ENCODE measurements at regions of chr10 and their contacts with region 1.

Region 1: DNA sequence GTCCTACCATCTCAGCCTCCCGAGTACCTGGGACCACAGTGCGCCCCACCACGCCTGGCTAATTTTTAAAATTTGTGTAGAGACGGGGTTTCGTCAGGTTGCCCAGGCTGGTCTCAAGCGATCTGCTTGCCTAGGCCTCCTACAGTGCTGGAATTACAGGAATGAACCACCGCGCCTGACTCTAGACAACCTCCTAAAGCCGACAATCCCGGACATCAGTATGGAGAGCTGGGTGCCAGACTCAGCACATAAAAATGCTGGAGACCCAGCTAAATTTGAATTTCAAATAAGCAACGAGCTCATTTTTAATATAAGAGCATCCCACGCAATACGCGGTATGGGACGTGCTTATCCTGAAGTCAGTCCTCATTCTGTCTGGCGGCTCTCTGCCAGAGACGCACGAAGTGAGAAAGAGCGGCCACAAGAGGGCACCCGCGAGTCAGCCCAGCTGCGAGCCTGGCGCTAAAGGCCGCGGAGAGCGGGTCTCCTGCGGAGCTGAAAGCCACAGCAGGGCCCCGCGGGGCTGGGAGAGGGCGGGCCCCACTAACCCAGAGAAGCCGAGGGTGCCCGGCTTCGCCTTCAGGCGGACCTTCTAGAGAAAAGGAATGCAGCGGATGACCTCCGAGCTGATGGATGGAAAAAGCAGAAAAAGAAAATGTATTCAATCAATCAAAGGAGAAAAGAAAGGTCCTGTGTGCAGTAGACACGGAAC is 7.0 kb downstream of the CALY start:
- DNase-seq: peak; percentile 75 to 95 (median 86)
- ATAC-seq: peak; percentile 86
- H3K4me3 ChIP-seq: peak overlapping the region; percentile 25
- H3K4me3 Mint-ChIP-seq: peak overlapping the region; percentile 42
- H3K27ac ChIP-seq: no peak overlapping the region
- H3K27ac Mint-ChIP-seq: no peak overlapping the region
- H3K4me1 ChIP-seq: peaks cover 27% of the 10 kb centered on the region
- H3K4me1 Mint-ChIP-seq: peaks cover 18% of the 10 kb centered on the region
- H3K27me3 ChIP-seq: peaks cover 42 to 43% of the 10 kb centered on the region in 2 experiments
- H3K27me3 Mint-ChIP-seq: peaks cover 52% of the 10 kb centered on the region
- CTCF ChIP-seq: peak; percentile 94

Region 2: GRCh38 chr10:133357285-133358151 is 27.9 kb after region 1 on chr10 and contains the start of gene FUOM:
- CTCF ChIA-PET with region 1: interaction called, 12 read pairs
- POLR2A ChIA-PET with region 1: no interaction called
- intact Hi-C with region 1: no loop called
- DNase-seq: peak; percentile 51 to 88 (median 66)
- ATAC-seq: peak; percentile 91
- H3K4me3 ChIP-seq: peak within 1 kb of the TSS; percentile 63
- H3K4me3 Mint-ChIP-seq: peak within 1 kb of the TSS; percentile 83
- H3K27ac ChIP-seq: peak within 1 kb of the TSS in 1 of 2 donors; percentile 29
- H3K27ac Mint-ChIP-seq: peak within 1 kb of the TSS; percentile 53
- H3K4me1 ChIP-seq: peaks cover 22% of the 10 kb centered on the region
- H3K4me1 Mint-ChIP-seq: no peaks in the 10 kb centered on the region
- H3K27me3 ChIP-seq: no peaks in the 10 kb centered on the region
- H3K27me3 Mint-ChIP-seq: no peaks in the 10 kb centered on the region
- CTCF ChIP-seq: no peak
- total RNA-seq, gene FUOM: 10.3 to 11.7 TPM

Region 3: GRCh38 chr10:133378251-133379096 is 48.8 kb after region 1 on chr10:
- CTCF ChIA-PET with region 1: interaction called, 5 read pairs
- POLR2A ChIA-PET with region 1: interaction called, 4 read pairs
- intact Hi-C with region 1: loop called in 1 of 2 experiments (anchors 2 kb)
- DNase-seq: peak; percentile 39 to 78 (median 53)
- ATAC-seq: peak; percentile 58
- H3K4me3 ChIP-seq: peak overlapping the region; percentile 93
- H3K4me3 Mint-ChIP-seq: peak overlapping the region; percentile 87
- H3K27ac ChIP-seq: peak overlapping the region in 1 of 2 donors; percentile 40
- H3K27ac Mint-ChIP-seq: peak overlapping the region; percentile 24
- H3K4me1 ChIP-seq: peaks cover 34% of the 10 kb centered on the region
- H3K4me1 Mint-ChIP-seq: peaks cover 4% of the 10 kb centered on the region
- H3K27me3 ChIP-seq: no peaks in the 10 kb centered on the region
- H3K27me3 Mint-ChIP-seq: no peaks in the 10 kb centered on the region
- CTCF ChIP-seq: no peak

Region 4: DNA sequence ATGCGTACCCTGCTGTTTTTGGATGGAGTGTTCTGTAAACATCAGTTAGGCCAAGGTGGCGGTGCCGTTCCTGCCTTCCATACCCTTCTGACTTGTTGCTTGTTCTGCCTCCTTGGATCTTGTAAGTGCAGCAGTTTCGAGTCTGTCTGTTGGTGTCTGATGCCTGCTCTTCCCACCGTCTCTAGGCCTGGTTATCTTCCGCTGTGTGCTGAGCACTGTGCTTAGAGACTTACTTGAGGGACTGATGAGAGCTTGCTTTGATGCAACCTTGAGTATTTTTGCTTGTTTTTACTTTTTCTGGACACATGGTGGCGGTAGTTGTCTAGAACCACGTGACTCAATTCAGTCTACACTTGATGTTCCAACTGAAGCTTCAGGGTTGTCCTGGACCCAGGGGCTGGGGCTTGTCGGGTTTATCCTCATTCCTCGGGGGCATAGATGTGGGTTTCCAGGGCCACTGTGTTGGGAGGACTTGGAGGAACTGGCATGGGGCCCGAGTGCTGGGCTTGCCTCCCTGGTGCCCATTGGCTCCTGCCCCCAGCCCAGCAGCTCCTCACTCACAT is 109.1 kb after region 1 on chr10:
- CTCF ChIA-PET with region 1: interaction called, 13 read pairs
- POLR2A ChIA-PET with region 1: no interaction called
- intact Hi-C with region 1: loop called in 1 of 2 experiments (anchors 5 kb)
- DNase-seq: peak in 3 of 14 experiments; percentile 54 to 60 (median 55)
- ATAC-seq: no peak
- H3K4me3 ChIP-seq: no peak overlapping the region
- H3K4me3 Mint-ChIP-seq: no peak overlapping the region
- H3K27ac ChIP-seq: no peak overlapping the region
- H3K27ac Mint-ChIP-seq: no peak overlapping the region
- H3K4me1 ChIP-seq: peaks cover 53% of the 10 kb centered on the region
- H3K4me1 Mint-ChIP-seq: peaks cover 29% of the 10 kb centered on the region
- H3K27me3 ChIP-seq: peaks cover 0 to 5% of the 10 kb centered on the region in 2 experiments
- H3K27me3 Mint-ChIP-seq: peaks cover 11% of the 10 kb centered on the region
- CTCF ChIP-seq: peak; percentile 14

Region 5: GRCh38 chr10:133520155-133520738 is 190.6 kb after region 1 on chr10:
- CTCF ChIA-PET with region 1: interaction called, 6 read pairs
- POLR2A ChIA-PET with region 1: no interaction called
- intact Hi-C with region 1: loop called (anchors 1 kb)
- DNase-seq: peak; percentile 74 to 95 (median 90)
- ATAC-seq: peak; percentile 98
- H3K4me3 ChIP-seq: peak overlapping the region; percentile 49
- H3K4me3 Mint-ChIP-seq: peak overlapping the region; percentile 58
- H3K27ac ChIP-seq: no peak overlapping the region
- H3K27ac Mint-ChIP-seq: no peak overlapping the region
- H3K4me1 ChIP-seq: peaks cover 12% of the 10 kb centered on the region
- H3K4me1 Mint-ChIP-seq: peaks cover 11% of the 10 kb centered on the region
- H3K27me3 ChIP-seq: peaks cover 0 to 4% of the 10 kb centered on the region in 2 experiments
- H3K27me3 Mint-ChIP-seq: peaks cover 17% of the 10 kb centered on the region
- CTCF ChIP-seq: peak; percentile 93

Measured in CD4-positive, alpha-beta T cell (primary cell).